Transverse colon (tissue), 4 donors: ENCODE measurements at regions of chr7 and their contacts with region 1.

Region 1: GRCh38 chr7:55951637-55952351 is at the start of gene MRPS17:
- DNase-seq: peak; percentile 96
- H3K4me3 ChIP-seq: peak within 1 kb of the TSS; percentile 56 to 94 (median 74)
- H3K27ac ChIP-seq: peak within 1 kb of the TSS; percentile 78 to 90 (median 82)
- H3K4me1 ChIP-seq: peaks cover 6 to 12% (median 7%) of the 10 kb centered on the region in 4 donors
- H3K27me3 ChIP-seq: no peaks in the 10 kb centered on the region
- CTCF ChIP-seq: peak in 2 of 5 experiments; percentile 22 to 35
- EP300 ChIP-seq: no peak
- POLR2A ChIP-seq: peak; percentile 88
- total RNA-seq, gene MRPS17: 1.1 to 11.5 (median 4.5) TPM

Region 2: DNA sequence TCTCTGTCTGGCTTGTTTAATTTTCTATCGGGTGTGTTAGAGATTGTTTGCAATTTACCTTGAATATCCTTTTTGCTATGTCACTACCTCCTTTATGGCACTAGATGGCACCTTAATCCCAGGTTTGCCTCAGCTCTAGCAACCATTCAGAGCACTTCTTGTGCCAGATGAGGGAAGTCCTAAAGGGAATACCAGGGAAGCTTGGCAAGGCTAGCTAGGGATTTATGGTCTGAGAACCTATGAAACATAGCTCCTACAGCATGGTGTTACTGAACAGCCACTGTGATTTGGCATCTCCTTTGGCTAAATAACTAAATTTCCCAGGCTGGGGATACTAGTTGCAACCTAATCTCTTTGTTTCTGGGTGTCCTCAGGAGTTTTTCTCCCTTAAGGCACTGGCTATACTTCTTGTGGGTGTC is 310.5 kb before region 1 on chr7:
- in situ Hi-C with region 1: loop called (anchors 25 kb)
- intact Hi-C with region 1: no loop called
- DNase-seq: peak; percentile 33
- H3K4me3 ChIP-seq: no peak overlapping the region
- H3K27ac ChIP-seq: no peak overlapping the region
- H3K4me1 ChIP-seq: peaks cover 0 to 5% (median 0%) of the 10 kb centered on the region in 4 donors
- H3K27me3 ChIP-seq: no peaks in the 10 kb centered on the region
- CTCF ChIP-seq: peak; percentile 70 to 85 (median 74)
- EP300 ChIP-seq: no peak
- POLR2A ChIP-seq: no peak

Region 3: DNA sequence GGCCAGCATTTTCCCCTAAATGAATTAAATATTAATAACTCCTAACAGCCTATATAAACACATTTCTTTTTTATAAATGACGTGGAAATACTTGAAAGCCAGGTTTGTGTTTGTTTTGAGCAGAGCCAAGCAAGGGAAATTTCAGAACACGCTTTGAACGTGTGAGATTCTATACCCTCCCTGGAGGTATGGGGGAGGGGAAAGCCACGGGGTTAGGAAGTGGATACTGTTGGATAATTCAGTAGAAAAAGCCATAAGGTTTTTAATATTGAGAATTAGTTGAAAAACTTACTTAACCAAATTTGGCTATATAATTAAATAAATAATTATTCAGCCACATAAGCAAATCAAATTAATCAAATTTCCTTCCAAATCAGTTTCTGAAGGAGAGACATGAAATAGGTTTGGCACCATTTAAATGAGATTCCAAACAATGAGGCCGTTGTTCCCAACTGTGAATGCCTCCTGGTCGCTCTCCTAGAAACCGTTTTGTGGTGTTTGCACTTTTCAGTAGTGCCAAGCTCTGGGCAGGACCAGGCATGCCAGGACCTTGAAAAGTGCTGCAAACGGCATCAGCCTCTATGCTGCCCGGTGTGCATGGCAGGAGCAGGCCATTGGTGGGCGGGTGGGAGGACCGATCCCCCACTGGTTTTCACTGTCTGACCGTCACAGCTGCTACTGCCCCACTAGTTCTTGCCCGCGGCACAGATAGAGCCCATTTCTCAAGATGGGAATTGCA is 177.3 kb before region 1 on chr7:
- in situ Hi-C with region 1: no loop called
- intact Hi-C with region 1: no loop called
- DNase-seq: no peak
- H3K4me3 ChIP-seq: no peak overlapping the region
- H3K27ac ChIP-seq: no peak overlapping the region
- H3K4me1 ChIP-seq: no peaks in the 10 kb centered on the region
- H3K27me3 ChIP-seq: no peaks in the 10 kb centered on the region
- CTCF ChIP-seq: no peak
- EP300 ChIP-seq: no peak
- POLR2A ChIP-seq: no peak

Region 4: DNA sequence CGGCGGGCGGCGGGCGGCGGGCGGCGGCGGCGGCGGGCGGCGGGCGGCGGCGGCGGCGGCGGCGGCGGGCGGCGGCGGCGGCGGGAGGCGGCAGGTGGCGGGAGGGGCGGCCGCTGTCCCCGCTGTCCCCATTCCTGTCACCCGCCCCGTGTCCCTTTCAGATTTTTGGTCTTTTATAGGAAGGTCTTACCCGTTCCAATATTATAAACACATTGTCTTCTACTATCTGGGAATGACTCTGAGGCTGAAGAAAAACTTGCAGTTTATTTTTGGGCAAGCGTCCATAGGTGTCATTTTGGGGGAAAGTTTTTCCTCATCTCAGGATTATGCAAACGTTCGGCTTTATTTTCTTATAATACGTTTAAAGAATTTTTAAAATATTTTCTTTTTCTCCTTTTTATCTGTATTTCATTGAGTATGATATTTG is 64.0 kb before region 1 on chr7:
- in situ Hi-C with region 1: loop called in 1 of 4 experiments (anchors 10 kb)
- intact Hi-C with region 1: no loop called
- DNase-seq: no peak
- H3K4me3 ChIP-seq: peak overlapping the region; percentile 34 to 54 (median 43)
- H3K27ac ChIP-seq: peak overlapping the region; percentile 64 to 83 (median 74)
- H3K4me1 ChIP-seq: peaks cover 0 to 9% (median 4%) of the 10 kb centered on the region in 4 donors
- H3K27me3 ChIP-seq: no peaks in the 10 kb centered on the region
- CTCF ChIP-seq: no peak
- EP300 ChIP-seq: no peak
- POLR2A ChIP-seq: no peak

Region 5: GRCh38 chr7:56033671-56034432 is 82.1 kb after region 1 on chr7:
- in situ Hi-C with region 1: no loop called
- intact Hi-C with region 1: no loop called
- DNase-seq: peak; percentile 70
- H3K4me3 ChIP-seq: peak overlapping the region; percentile 39 to 75 (median 70)
- H3K27ac ChIP-seq: peak overlapping the region; percentile 73 to 86 (median 80)
- H3K4me1 ChIP-seq: peaks cover 0 to 14% (median 8%) of the 10 kb centered on the region in 4 donors
- H3K27me3 ChIP-seq: no peaks in the 10 kb centered on the region
- CTCF ChIP-seq: peak in 4 of 5 experiments; percentile 27 to 42 (median 35)
- EP300 ChIP-seq: no peak
- POLR2A ChIP-seq: no peak